ENCODE measurements at regions of chr9 and their contacts with region 1.

Region 1: DNA sequence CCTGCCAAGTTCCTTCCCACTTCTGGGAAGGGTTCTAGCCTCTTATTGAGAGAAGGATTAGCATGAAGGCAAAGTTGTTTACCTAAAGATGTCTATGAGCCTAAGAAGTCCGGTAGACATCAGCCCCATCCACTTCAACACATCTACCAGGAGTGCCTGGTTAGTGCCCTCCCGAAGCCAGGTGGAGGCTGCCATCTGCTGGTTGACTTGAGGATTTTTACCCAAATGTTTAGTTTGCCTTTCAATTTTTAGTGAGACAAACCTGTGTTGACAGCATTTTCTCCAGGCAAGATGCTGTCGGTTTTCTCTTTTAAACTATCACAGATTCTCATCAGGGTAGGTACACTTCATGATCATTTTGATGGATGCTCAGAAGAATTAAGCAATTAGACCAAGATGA is 83.6 kb upstream of the TNFSF8 start:
- DNase-seq: peak; percentile 74
- ATAC-seq: peak; percentile 66
- H3K4me3 ChIP-seq: no peak overlapping the region
- H3K27ac ChIP-seq: no peak overlapping the region
- H3K4me1 ChIP-seq: peaks cover 16% of the 10 kb centered on the region
- H3K27me3 ChIP-seq: no peaks in the 10 kb centered on the region
- CTCF ChIP-seq: peak; percentile 78

Region 2: GRCh38 chr9:114662081-114662989 is 351.7 kb before region 1 on chr9:
- CTCF ChIA-PET with region 1: no interaction called
- POLR2A ChIA-PET with region 1: no interaction called
- intact Hi-C with region 1: loop called (anchors 1 kb)
- DNase-seq: peak; percentile 68
- ATAC-seq: peak; percentile 87
- H3K4me3 ChIP-seq: no peak overlapping the region
- H3K27ac ChIP-seq: no peak overlapping the region
- H3K4me1 ChIP-seq: no peaks in the 10 kb centered on the region
- H3K27me3 ChIP-seq: no peaks in the 10 kb centered on the region
- CTCF ChIP-seq: peak; percentile 85

Region 3: DNA sequence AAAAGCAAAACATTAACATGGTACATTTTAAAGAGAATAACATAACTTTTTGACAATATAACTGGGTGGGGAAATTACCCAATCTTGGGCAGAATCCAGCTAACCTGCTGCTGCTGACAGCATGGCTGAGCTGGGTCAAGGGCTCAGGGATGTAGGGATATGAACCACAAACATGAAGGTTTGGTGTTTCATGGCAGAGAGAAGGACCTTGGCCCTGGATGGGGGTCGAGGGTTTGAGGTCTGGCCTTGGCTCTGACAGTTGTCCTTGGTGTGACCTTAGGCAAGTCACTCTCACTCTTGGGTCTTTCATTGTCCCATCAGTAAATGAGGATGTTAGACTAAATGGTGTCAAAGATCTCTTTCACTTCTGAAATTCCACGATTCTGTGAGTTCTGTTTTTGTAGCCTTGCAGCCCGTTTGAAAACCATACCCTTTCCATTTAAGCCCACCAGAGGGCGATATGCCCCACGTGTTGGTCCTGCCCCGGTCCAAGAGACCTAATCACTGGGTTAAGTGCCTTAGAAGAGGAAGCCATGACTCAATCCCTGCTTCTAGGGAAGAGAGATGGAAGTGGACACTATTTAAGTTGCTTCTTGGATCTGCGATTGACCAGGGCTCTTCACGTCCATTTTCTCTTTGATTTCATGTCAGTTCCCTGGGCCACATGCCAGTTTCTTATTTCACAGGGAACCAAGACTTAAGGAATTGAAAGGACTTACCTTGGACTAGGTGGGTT is 275.2 kb before region 1 on chr9:
- CTCF ChIA-PET with region 1: interaction called, 4 read pairs
- POLR2A ChIA-PET with region 1: no interaction called
- intact Hi-C with region 1: loop called (anchors 1 kb)
- DNase-seq: peak; percentile 80
- ATAC-seq: peak; percentile 52
- H3K4me3 ChIP-seq: no peak overlapping the region
- H3K27ac ChIP-seq: peak overlapping the region; percentile 63
- H3K4me1 ChIP-seq: peaks cover 33% of the 10 kb centered on the region
- H3K27me3 ChIP-seq: no peaks in the 10 kb centered on the region
- CTCF ChIP-seq: peak; percentile 87

Region 4: GRCh38 chr9:114824110-114824509 is 189.9 kb before region 1 on chr9:
- CTCF ChIA-PET with region 1: no interaction called
- POLR2A ChIA-PET with region 1: no interaction called
- intact Hi-C with region 1: no loop called
- DNase-seq: no peak
- ATAC-seq: no peak
- H3K4me3 ChIP-seq: no peak overlapping the region
- H3K27ac ChIP-seq: no peak overlapping the region
- H3K4me1 ChIP-seq: no peaks in the 10 kb centered on the region
- H3K27me3 ChIP-seq: no peaks in the 10 kb centered on the region
- CTCF ChIP-seq: no peak

Region 5: DNA sequence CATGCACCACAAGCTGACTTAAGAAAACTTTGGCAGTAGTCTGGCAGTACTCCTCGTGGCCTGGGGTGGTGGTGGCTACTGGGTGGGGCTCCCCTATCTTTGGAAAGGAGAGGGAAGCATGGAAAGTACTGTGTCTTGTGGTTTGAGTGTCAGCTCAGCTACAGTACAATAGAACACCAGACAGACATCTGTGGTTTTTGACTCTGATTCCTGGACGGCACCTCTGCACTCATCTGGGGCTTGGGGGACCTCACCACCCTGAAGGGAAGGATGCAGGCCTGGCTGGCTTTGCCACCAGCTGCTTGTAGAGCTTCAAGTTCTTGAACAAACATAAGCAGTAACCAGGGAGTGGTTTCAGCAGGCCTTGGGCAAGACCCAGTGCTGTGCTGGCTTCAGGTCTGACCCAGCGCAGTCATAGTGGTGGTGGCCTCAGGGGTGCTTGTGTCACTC is 124.2 kb before region 1 on chr9:
- CTCF ChIA-PET with region 1: no interaction called
- POLR2A ChIA-PET with region 1: no interaction called
- intact Hi-C with region 1: no loop called
- DNase-seq: peak; percentile 33
- ATAC-seq: no peak
- H3K4me3 ChIP-seq: no peak overlapping the region
- H3K27ac ChIP-seq: 0 out of 2 replicates have a peak overlapping the region, but pooled peaks have one; percentile 10
- H3K4me1 ChIP-seq: peaks cover 39% of the 10 kb centered on the region
- H3K27me3 ChIP-seq: no peaks in the 10 kb centered on the region
- CTCF ChIP-seq: no peak

Region 6: GRCh38 chr9:115117999-115118878 is 104.2 kb after region 1 on chr9 and contains the start of gene TNC:
- CTCF ChIA-PET with region 1: no interaction called
- POLR2A ChIA-PET with region 1: no interaction called
- intact Hi-C with region 1: loop called (anchors 5 kb)
- DNase-seq: peak; percentile 81
- ATAC-seq: peak; percentile 55
- H3K4me3 ChIP-seq: peak within 1 kb of the TSS; percentile 75
- H3K27ac ChIP-seq: peak within 1 kb of the TSS; percentile 90
- H3K4me1 ChIP-seq: peaks cover 62% of the 10 kb centered on the region
- H3K27me3 ChIP-seq: no peaks in the 10 kb centered on the region
- CTCF ChIP-seq: no peak
- total RNA-seq, gene TNC: 60.1 and 71.0 TPM in 2 replicates

Region 7: GRCh38 chr9:115524453-115525059 is 510.6 kb after region 1 on chr9:
- CTCF ChIA-PET with region 1: no interaction called
- POLR2A ChIA-PET with region 1: no interaction called
- intact Hi-C with region 1: loop called (anchors 2 kb)
- DNase-seq: peak; percentile 77
- ATAC-seq: peak; percentile 45
- H3K4me3 ChIP-seq: no peak overlapping the region
- H3K27ac ChIP-seq: no peak overlapping the region
- H3K4me1 ChIP-seq: no peaks in the 10 kb centered on the region
- H3K27me3 ChIP-seq: no peaks in the 10 kb centered on the region
- CTCF ChIP-seq: peak; percentile 76

Measured in PC-3 (cell line).